ENCODE measurements at regions of chr3 and their contacts with region 1.

Region 1: DNA sequence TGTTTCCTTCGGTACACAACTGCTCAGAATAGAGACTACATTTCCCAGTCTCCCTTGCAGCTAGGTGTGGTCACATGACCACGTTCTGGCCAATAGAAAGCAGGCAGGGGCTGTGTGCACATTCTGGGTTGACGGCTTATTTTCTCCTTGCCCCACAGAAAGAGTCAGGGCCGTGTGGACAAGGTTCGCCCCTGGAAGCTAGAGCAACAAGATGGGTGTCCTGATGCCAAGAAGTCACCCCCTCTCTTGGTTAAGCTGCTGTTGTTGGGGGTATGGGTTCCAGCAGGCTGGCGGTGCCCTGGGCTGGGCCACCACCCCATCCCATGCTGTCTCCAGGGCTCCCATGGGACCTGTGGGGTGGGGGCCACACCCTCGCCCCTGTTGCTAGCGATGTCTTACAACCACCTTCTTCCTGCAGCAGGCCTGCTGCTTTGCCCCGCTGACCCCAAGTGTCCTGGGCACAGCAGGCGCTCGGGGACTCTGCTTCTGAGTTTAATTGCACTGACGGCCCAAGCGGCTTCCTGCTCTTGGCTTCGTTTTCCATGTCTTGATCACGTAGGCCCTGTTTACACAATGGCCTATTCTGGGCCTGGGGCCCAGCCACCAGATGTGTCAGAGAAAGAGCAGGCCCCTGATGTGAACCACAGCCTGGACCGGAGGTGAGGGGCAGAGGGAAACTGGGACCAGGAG is 24.9 kb downstream of the ABTB1 start:
- DNase-seq: peak; percentile 77
- ATAC-seq: peak; percentile 85
- H3K4me3 Mint-ChIP-seq: no peak overlapping the region
- H3K27ac Mint-ChIP-seq: no peak overlapping the region
- H3K4me1 Mint-ChIP-seq: peaks cover 3% of the 10 kb centered on the region
- H3K27me3 Mint-ChIP-seq: no peaks in the 10 kb centered on the region
- CTCF ChIP-seq: no peak

Region 2: DNA sequence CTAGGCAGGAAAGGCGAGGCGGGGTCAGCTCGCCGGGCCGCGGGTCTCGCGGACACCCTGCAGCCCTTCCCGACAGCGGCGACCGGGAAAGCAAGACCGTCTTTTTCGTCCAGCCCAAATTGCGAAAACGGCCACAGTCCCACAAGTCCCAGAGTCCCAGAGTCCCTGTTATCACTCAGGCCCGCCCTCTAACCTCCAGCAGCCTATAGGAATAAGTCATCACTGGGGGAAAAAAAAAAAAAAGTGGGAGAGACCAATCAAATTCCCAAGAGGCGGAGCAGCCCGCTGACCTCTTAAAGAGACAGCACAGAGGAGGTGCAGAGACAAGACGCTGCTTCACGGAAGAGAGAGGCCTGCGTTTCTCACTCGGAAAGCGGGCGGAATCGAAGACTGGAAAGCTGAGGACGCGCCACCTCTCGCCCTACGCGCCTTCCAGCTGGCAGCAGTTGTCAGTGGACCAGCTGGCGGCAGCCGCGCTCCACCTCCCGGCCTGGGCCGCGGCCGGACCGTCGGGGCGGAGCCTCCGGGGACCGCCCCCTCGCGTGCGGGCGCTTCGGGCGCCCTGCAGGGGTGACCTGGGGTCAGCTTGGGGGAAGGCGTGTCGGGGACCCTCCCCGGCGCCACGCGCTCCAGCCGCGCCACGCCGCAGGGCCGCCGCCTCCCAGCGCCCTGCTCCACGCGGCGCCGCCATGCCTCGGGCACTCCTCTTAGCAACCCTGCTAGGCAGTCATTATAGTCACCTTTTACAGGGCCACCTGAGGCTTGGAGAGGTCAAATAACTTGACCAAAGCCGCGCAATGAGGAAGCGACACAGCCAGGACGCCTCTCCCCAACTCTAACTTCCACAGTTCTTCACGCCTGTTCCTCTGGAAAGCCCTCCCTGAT is 106.9 kb before region 1 on chr3 and contains the start of gene TPRA1:
- CTCF ChIA-PET with region 1: no interaction called
- POLR2A ChIA-PET with region 1: no interaction called
- intact Hi-C with region 1: no loop called
- DNase-seq: peak; percentile 86
- ATAC-seq: peak; percentile 85
- H3K4me3 Mint-ChIP-seq: peak within 1 kb of the TSS; percentile 83
- H3K27ac Mint-ChIP-seq: peak within 1 kb of the TSS; percentile 93
- H3K4me1 Mint-ChIP-seq: peaks cover 20% of the 10 kb centered on the region
- H3K27me3 Mint-ChIP-seq: no peaks in the 10 kb centered on the region
- CTCF ChIP-seq: no peak
- total RNA-seq, gene TPRA1: 26.6 to 28.0 TPM

Region 3: DNA sequence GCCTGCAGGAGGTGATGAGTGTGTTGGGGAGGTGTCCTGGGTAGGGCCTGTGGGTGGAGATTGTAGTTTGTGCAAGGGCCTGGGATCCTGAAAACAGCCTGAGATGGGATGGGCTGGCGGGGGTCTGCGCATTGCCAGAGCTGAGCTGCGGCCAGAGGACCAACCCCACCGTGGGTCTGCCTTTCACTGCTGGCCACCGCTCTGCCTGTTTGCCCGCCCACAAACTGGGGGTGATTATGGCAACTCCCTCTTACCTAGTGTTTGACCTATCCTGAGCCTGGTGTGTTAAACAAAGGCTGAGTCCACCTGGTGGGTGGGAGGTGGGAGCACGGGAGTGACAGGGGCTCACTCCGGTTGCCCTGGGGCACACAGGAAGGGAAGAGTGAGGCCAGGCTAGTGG is 15.1 kb before region 1 on chr3:
- CTCF ChIA-PET with region 1: interaction called, 17 read pairs
- POLR2A ChIA-PET with region 1: no interaction called
- intact Hi-C with region 1: no loop called
- DNase-seq: no peak
- ATAC-seq: no peak
- H3K4me3 Mint-ChIP-seq: no peak overlapping the region
- H3K27ac Mint-ChIP-seq: no peak overlapping the region
- H3K4me1 Mint-ChIP-seq: peaks cover 11% of the 10 kb centered on the region
- H3K27me3 Mint-ChIP-seq: no peaks in the 10 kb centered on the region
- CTCF ChIP-seq: no peak

Region 4: DNA sequence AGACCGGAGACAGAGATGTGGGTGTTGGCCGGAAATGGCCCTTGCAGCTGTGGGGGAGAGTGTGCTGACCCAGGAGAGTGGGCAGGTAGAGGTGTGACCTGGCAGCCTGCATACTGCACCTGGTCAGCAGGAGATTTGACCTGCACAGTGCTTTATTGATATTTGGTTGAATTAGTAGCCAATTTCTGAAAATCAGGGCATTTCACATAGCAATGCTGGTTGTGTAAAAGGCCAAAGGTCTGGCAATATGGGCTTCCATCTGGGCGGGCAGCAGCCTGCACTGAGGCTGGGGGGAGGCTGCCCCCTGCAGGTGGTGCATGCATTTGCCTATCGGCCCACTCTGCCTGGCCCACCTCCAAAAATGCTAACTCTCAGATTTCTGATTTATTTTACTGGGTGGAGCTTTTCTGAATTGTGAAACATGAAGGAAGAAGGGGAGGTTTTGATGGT is 134.1 kb after region 1 on chr3:
- CTCF ChIA-PET with region 1: interaction called, 3 read pairs
- POLR2A ChIA-PET with region 1: no interaction called
- intact Hi-C with region 1: loop called (anchors 10 kb)
- DNase-seq: peak; percentile 54
- ATAC-seq: peak; percentile 65
- H3K4me3 Mint-ChIP-seq: no peak overlapping the region
- H3K27ac Mint-ChIP-seq: no peak overlapping the region
- H3K4me1 Mint-ChIP-seq: peaks cover 4% of the 10 kb centered on the region
- H3K27me3 Mint-ChIP-seq: peaks cover 9% of the 10 kb centered on the region
- CTCF ChIP-seq: peak; percentile 65